Mammary epithelial cell (primary cell): ENCODE measurements at regions of chr7 and their contacts with region 1.

Region 1: GRCh38 chr7:101031082-101031481 is 11.2 kb downstream of the MUC17 start:
- DNase-seq: peak; percentile 8
- H3K4me3 ChIP-seq: no peak overlapping the region
- H3K27ac ChIP-seq: no peak overlapping the region
- H3K4me1 ChIP-seq: no peaks in the 10 kb centered on the region
- H3K27me3 ChIP-seq: peaks cover 3% of the 10 kb centered on the region
- CTCF ChIP-seq: peak in 1 of 2 donors; percentile 39

Region 2: GRCh38 chr7:100965723-100966541 is 65.2 kb before region 1 on chr7:
- CTCF ChIA-PET with region 1: no interaction called
- dilution Hi-C with region 1: no loop called
- in situ Hi-C with region 1: no loop called
- intact Hi-C with region 1: loop called (anchors 1 kb)
- DNase-seq: peak; percentile 74
- H3K4me3 ChIP-seq: peak overlapping the region in 2 of 3 experiments; percentile 23 to 34
- H3K27ac ChIP-seq: no peak overlapping the region
- H3K4me1 ChIP-seq: peaks cover 7% of the 10 kb centered on the region
- H3K27me3 ChIP-seq: peaks cover 17% of the 10 kb centered on the region
- CTCF ChIP-seq: peak; percentile 82 to 86